Activated CD4-positive, alpha-beta T cell treated with anti-CD3 and anti-CD28 coated beads, Interleukin-2, amount 10 ng/mL, durations not matched to agents 24 days and 14 days (primary cell): ENCODE measurements at regions of chr10 and their contacts with region 1.

Region 1: GRCh38 chr10:93509816-93510215 is 13.4 kb downstream of the CEP55 start:
- DNase-seq: no peak
- H3K4me3 Mint-ChIP-seq: no peak overlapping the region
- H3K27ac Mint-ChIP-seq: no peak overlapping the region
- H3K4me1 Mint-ChIP-seq: peaks cover 24% of the 10 kb centered on the region
- H3K27me3 Mint-ChIP-seq: no peaks in the 10 kb centered on the region

Region 2: DNA sequence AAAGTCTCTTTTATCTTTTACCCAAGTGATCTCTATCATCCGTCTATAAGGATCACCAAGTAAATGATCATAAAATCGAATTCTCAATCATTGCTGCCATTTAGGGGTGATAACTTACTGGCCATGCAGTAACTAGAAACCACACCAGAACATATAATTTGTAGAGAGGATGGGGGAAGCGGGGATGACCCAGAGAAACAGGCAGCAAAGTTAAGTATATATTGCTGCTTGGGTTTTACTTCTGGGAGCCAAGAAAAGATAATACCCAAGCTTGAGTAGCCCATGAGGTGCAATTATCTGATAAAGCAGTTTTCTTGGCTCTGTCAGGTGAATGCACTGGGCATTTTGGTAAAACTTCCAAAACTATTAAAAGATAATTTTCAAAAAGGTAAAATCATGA is 642.6 kb before region 1 on chr10:
- intact Hi-C with region 1: no loop called
- DNase-seq: no peak
- H3K4me3 Mint-ChIP-seq: no peak overlapping the region
- H3K27ac Mint-ChIP-seq: no peak overlapping the region
- H3K4me1 Mint-ChIP-seq: peaks cover 2% of the 10 kb centered on the region
- H3K27me3 Mint-ChIP-seq: no peaks in the 10 kb centered on the region

Region 3: DNA sequence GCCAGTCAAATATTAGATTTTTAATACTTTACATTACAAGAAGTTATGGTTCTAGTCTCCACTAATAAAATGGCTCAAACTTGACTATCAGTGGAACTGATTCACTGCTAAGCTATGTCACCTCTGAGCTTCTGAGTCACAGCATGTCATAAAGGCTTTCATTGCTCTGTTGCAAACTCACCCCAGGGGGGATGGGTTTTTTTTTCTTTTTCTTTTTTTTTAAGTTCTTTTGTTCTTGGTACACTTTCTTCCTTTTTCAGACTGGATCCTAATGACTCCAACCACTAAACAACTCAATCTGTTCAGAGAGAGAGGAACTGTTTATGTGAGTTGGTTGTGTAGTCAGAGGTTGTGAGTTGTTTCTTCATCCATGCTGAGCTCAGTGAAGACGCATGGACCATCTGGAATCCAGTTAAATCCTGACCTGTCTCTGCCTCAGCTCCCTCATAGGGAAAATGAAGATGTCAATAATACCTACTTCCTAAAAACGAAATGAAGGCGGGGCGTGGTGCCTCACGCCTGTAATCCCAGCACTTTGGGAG is 38.6 kb before region 1 on chr10:
- intact Hi-C with region 1: no loop called
- DNase-seq: no peak
- H3K4me3 Mint-ChIP-seq: no peak overlapping the region
- H3K27ac Mint-ChIP-seq: no peak overlapping the region
- H3K4me1 Mint-ChIP-seq: peaks cover 5% of the 10 kb centered on the region
- H3K27me3 Mint-ChIP-seq: no peaks in the 10 kb centered on the region

Region 4: GRCh38 chr10:93496322-93497041 is 13.3 kb before region 1 on chr10 and contains the start of gene CEP55:
- intact Hi-C with region 1: loop called (anchors 2 kb)
- DNase-seq: peak; percentile 99
- H3K4me3 Mint-ChIP-seq: peak within 1 kb of the TSS; percentile 90
- H3K27ac Mint-ChIP-seq: peak within 1 kb of the TSS; percentile 93
- H3K4me1 Mint-ChIP-seq: peaks cover 34% of the 10 kb centered on the region
- H3K27me3 Mint-ChIP-seq: no peaks in the 10 kb centered on the region
- total RNA-seq, gene CEP55: 58.5 and 59.3 TPM in 2 replicates